ENCODE measurements at regions of chr1 and their contacts with region 1.

Region 1: GRCh38 chr1:55284852-55285251 is 69.7 kb upstream of the USP24 start:
- DNase-seq: peak in 1 of 2 experiments; percentile 41
- H3K4me3 ChIP-seq: no peak overlapping the region
- H3K27ac ChIP-seq: no peak overlapping the region
- H3K4me1 ChIP-seq: peaks cover 4% of the 10 kb centered on the region; the same call in 1 of the 2 replicates
- H3K27me3 ChIP-seq: no peaks in the 10 kb centered on the region
- CTCF ChIP-seq: peak; percentile 79

Region 2: GRCh38 chr1:54091666-54092065 is 1193.2 kb before region 1 on chr1:
- CTCF ChIA-PET with region 1: no interaction called
- POLR2A ChIA-PET with region 1: no interaction called
- intact Hi-C with region 1: no loop called
- DNase-seq: no peak
- H3K4me3 ChIP-seq: no peak overlapping the region
- H3K27ac ChIP-seq: no peak overlapping the region
- H3K4me1 ChIP-seq: no peaks in the 10 kb centered on the region
- H3K27me3 ChIP-seq: no peaks in the 10 kb centered on the region
- CTCF ChIP-seq: no peak

Region 3: GRCh38 chr1:55321942-55322341 is 37.1 kb after region 1 on chr1:
- CTCF ChIA-PET with region 1: no interaction called
- POLR2A ChIA-PET with region 1: no interaction called
- intact Hi-C with region 1: no loop called
- DNase-seq: peak in 1 of 2 experiments; percentile 51
- H3K4me3 ChIP-seq: no peak overlapping the region
- H3K27ac ChIP-seq: peak overlapping the region; percentile 24
- H3K4me1 ChIP-seq: peaks cover 25% of the 10 kb centered on the region
- H3K27me3 ChIP-seq: no peaks in the 10 kb centered on the region
- CTCF ChIP-seq: no peak

Region 4: GRCh38 chr1:55337801-55338447 is 53.1 kb after region 1 on chr1:
- CTCF ChIA-PET with region 1: no interaction called
- POLR2A ChIA-PET with region 1: no interaction called
- intact Hi-C with region 1: loop called (anchors 5 kb)
- DNase-seq: peak in 1 of 2 experiments; percentile 6
- H3K4me3 ChIP-seq: no peak overlapping the region
- H3K27ac ChIP-seq: no peak overlapping the region
- H3K4me1 ChIP-seq: no peaks in the 10 kb centered on the region
- H3K27me3 ChIP-seq: no peaks in the 10 kb centered on the region
- CTCF ChIP-seq: peak; percentile 39; the same call in 1 of the 2 replicates

Region 5: DNA sequence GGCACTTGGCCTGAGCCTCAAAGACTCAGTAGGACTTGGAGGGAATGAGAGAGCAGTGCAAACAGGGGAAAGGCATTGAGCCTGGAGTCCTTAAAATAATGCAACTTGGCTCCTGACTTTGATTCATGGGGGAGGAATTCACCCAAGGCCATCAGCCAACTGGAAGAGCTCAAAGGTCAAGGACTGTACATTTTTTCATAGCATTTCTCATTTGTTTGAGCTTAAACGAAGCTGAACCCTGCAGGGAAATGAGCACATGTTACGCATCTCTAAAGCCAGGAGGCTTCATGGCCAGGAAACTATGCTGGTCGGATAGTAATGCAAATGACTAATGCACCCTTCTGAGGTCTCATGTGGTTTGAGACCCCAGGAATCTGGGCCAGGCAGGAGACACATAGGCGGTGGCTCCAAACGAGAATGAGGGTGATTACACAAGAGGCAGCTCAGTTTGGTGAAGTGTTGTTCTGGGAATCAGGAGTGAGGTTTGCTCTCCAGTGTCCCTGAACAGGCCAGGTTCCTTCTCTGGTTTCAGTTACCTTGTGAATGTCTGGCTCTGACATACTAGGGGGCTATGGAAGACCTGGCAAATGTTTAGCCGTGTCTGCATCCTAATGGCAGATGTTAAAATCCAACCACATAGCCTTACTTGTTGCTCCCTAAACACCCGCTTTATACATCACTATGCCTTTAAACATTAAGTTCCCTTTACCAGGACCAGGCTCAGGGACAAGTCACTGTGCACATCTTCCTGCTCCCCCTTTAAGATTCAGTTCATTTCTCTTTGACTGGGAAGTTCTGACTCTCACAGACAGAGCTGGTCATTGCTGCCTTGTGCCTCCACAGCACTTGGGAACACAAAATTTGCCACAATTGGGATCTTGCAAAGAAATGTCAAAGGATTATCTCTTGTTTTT is 434.2 kb after region 1 on chr1:
- CTCF ChIA-PET with region 1: no interaction called
- POLR2A ChIA-PET with region 1: no interaction called
- intact Hi-C with region 1: loop called (anchors 10 kb)
- DNase-seq: peak; percentile 85 to 99
- H3K4me3 ChIP-seq: no peak overlapping the region
- H3K27ac ChIP-seq: peak overlapping the region; percentile 92
- H3K4me1 ChIP-seq: peaks cover 40% of the 10 kb centered on the region
- H3K27me3 ChIP-seq: no peaks in the 10 kb centered on the region
- CTCF ChIP-seq: no peak

Region 6: DNA sequence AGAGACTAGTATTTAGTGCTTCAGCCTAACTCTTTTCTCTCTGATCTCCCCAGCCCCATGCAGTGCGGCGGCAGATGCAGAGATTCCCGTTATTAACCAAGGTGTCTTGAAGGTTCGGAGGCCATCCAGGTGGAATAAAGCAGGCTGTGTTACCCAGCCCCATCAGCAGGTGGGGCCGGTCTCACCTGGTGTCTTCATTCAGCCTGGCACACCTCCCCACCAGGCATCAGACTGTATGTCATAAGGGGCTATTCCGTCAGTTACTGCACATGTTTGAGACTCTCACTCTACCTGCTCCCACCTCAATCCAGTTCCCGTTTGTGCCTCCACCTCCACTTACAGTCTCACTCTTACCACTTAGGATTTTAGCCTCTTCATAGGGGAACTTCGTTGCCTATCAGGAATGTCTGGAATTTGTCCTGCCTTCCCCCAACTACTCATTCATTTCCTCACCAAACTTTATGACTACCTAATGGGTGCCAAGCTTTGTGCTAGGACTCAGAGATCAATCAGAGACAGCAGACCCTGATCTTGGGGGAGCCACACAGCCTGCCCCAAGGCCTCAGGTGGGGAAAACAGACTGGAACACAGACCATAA is 1124.3 kb after region 1 on chr1:
- CTCF ChIA-PET with region 1: no interaction called
- POLR2A ChIA-PET with region 1: no interaction called
- intact Hi-C with region 1: loop called (anchors 10 kb)
- DNase-seq: peak in 1 of 2 experiments; percentile 31
- H3K4me3 ChIP-seq: no peak overlapping the region
- H3K27ac ChIP-seq: no peak overlapping the region
- H3K4me1 ChIP-seq: peaks cover 8% of the 10 kb centered on the region; the same call in 1 of the 2 replicates
- H3K27me3 ChIP-seq: no peaks in the 10 kb centered on the region
- CTCF ChIP-seq: peak; percentile 67

Region 7: GRCh38 chr1:56502700-56503245 is 1217.9 kb after region 1 on chr1:
- CTCF ChIA-PET with region 1: no interaction called
- POLR2A ChIA-PET with region 1: interaction called, 12 read pairs
- intact Hi-C with region 1: loop called (anchors 10 kb)
- DNase-seq: no peak
- H3K4me3 ChIP-seq: no peak overlapping the region
- H3K27ac ChIP-seq: no peak overlapping the region
- H3K4me1 ChIP-seq: no peaks in the 10 kb centered on the region
- H3K27me3 ChIP-seq: no peaks in the 10 kb centered on the region
- CTCF ChIP-seq: no peak

Region 8: DNA sequence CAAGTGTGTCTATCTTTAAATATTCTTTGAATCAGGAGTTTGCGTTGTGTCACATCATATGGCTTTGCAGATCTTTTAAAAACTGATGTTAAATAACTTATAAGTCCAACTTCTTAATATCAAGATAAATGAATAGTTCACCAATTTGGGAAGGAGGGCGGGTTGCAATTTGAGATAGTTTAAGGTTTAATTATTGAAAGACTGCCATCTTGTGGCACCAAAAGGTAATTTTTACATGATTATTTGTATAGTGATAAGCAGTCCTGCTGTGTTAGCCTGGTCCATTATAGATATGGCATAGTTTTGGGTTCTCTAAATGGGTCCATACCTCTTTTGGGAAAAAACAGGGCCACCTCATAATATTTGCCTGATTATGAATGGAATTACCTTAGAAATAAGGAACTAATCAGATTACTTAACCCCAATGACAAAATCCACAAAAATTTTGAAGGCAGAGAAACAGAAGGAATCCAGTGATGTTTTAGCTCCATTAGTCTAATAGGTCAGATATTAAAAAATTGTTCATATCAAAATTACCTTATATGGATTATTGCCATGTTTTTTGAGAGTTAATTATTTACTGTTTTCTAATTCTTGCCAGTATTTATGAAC is 1424.5 kb after region 1 on chr1:
- CTCF ChIA-PET with region 1: no interaction called
- POLR2A ChIA-PET with region 1: no interaction called
- intact Hi-C with region 1: loop called (anchors 2 kb)
- DNase-seq: peak in 1 of 2 experiments; percentile 49
- H3K4me3 ChIP-seq: no peak overlapping the region
- H3K27ac ChIP-seq: no peak overlapping the region
- H3K4me1 ChIP-seq: peaks cover 17% of the 10 kb centered on the region
- H3K27me3 ChIP-seq: no peaks in the 10 kb centered on the region
- CTCF ChIP-seq: peak; percentile 80

Measured in PC-9 (cell line).